CD4-positive, alpha-beta memory T cell (primary cell): ENCODE measurements at regions of chr5 and their contacts with region 1.

Region 1: DNA sequence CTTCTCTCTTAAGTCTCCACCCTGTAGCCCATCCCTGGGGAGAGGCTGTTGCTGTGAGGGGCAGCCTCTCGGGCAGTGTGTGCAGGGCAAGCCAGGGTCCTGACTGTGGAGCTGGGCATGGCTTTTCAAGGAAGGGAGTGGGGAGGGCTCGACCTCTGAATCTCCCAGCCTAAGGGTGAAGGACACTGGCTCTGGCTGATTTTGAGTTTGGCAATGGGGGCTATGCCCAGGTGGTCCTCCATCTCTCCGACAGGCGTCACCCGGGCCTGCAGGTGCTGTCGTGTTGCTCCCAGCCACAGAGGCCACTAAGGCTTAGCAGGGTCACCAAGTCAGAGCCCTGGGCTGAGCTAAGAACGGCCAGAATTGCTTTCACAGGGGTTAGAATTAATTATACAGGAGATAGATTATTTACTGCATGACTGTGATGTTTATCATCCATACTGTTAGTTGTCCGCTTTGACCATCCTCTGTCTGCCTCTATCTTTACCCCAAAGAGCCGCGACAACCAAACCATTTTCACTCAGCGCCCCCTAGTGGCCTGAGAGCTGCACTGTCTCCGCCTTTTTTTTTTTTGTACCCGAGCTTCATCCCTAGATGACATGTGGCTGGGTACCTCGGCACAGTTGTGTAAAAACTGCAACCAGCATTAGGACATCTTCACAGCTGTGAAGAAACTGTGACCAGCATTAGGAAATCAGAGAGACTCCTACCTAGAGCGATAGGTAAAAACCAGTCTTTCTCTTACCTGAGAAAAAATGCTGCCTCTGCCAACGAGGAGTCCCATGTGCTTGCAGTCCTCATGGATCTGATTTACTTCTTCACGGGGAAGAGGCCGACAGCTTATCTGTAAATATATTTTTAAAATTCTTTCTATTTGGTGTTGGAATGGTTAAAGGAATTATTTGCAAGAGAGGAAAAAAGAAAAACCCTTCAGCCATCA is 44.5 kb downstream of the AGXT2 start:
- DNase-seq: peak in 4 of 5 donors; percentile 22 to 46 (median 32)
- H3K4me3 ChIP-seq: no peak overlapping the region
- H3K4me3 Mint-ChIP-seq: no peak overlapping the region
- H3K27ac ChIP-seq: no peak overlapping the region
- H3K27ac Mint-ChIP-seq: no peak overlapping the region
- H3K4me1 ChIP-seq: no peaks in the 10 kb centered on the region
- H3K4me1 Mint-ChIP-seq: no peaks in the 10 kb centered on the region
- H3K27me3 ChIP-seq: no peaks in the 10 kb centered on the region
- H3K27me3 Mint-ChIP-seq: peaks cover 14 to 22% of the 10 kb centered on the region in 2 donors

Region 2: GRCh38 chr5:34474573-34475021 is 528.7 kb before region 1 on chr5:
- CTCF ChIA-PET with region 1: no interaction called
- POLR2A ChIA-PET with region 1: no interaction called
- intact Hi-C with region 1: loop called (anchors 1 kb)
- DNase-seq: peak in 4 of 5 donors; percentile 15 to 28 (median 24)
- H3K4me3 ChIP-seq: no peak overlapping the region
- H3K4me3 Mint-ChIP-seq: no peak overlapping the region
- H3K27ac ChIP-seq: no peak overlapping the region
- H3K27ac Mint-ChIP-seq: no peak overlapping the region
- H3K4me1 ChIP-seq: no peaks in the 10 kb centered on the region
- H3K4me1 Mint-ChIP-seq: peaks cover 0 to 2% (median 0%) of the 10 kb centered on the region in 4 donors
- H3K27me3 ChIP-seq: no peaks in the 10 kb centered on the region
- H3K27me3 Mint-ChIP-seq: peaks cover 7 to 13% of the 10 kb centered on the region in 2 donors

Region 3: GRCh38 chr5:34486160-34486848 is 517.0 kb before region 1 on chr5:
- CTCF ChIA-PET with region 1: interaction called, 6 read pairs
- POLR2A ChIA-PET with region 1: no interaction called
- intact Hi-C with region 1: loop called (anchors 1 kb)
- DNase-seq: peak in 4 of 5 donors; percentile 34 to 47 (median 42)
- H3K4me3 ChIP-seq: no peak overlapping the region
- H3K4me3 Mint-ChIP-seq: no peak overlapping the region
- H3K27ac ChIP-seq: no peak overlapping the region
- H3K27ac Mint-ChIP-seq: no peak overlapping the region
- H3K4me1 ChIP-seq: no peaks in the 10 kb centered on the region
- H3K4me1 Mint-ChIP-seq: peaks cover 3 to 5% (median 4%) of the 10 kb centered on the region in 4 donors
- H3K27me3 ChIP-seq: no peaks in the 10 kb centered on the region
- H3K27me3 Mint-ChIP-seq: peaks cover 17 to 30% of the 10 kb centered on the region in 2 donors

Region 4: GRCh38 chr5:34522599-34523386 is 480.5 kb before region 1 on chr5:
- CTCF ChIA-PET with region 1: interaction called, 14 read pairs
- POLR2A ChIA-PET with region 1: no interaction called
- intact Hi-C with region 1: loop called (anchors 1 kb)
- DNase-seq: peak; percentile 33 to 50 (median 41)
- H3K4me3 ChIP-seq: no peak overlapping the region
- H3K4me3 Mint-ChIP-seq: no peak overlapping the region
- H3K27ac ChIP-seq: no peak overlapping the region
- H3K27ac Mint-ChIP-seq: no peak overlapping the region
- H3K4me1 ChIP-seq: no peaks in the 10 kb centered on the region
- H3K4me1 Mint-ChIP-seq: peaks cover 0 to 1% (median 0%) of the 10 kb centered on the region in 4 donors
- H3K27me3 ChIP-seq: no peaks in the 10 kb centered on the region
- H3K27me3 Mint-ChIP-seq: peaks cover 2 to 7% of the 10 kb centered on the region in 2 donors

Region 5: DNA sequence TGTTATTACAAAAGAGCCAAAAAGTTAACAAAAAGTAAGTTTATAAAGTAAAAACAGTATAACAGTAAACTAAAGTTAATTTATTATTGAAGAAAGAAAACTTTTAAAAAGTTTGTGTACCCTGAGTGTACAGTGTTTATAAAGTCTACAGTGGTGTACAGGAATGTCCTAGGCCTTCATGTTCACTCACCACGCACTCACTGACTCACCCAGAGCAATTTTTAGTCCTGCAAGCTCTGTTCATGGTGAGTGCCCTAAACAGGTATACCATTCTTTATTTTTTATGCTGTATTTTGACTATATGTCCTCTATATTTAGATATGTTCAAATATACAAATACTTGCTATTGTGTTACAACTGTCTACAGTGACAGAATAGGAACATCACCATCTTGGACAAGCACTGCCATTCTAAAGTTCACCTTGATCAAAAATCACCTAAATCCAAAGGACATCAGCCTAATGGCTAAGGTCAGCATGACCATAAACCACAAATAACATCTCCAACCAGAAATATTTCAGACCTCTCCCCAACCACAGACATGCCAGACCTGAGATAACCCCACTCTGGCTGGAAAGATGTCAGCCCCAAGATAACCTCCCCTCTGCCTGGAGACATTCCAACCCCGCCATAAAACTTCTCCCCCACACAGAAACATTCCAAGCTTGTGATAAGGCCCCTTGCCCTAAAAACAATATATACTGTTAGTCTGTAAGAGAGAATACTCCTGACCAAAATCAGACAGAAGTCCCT is 11.6 kb before region 1 on chr5:
- CTCF ChIA-PET with region 1: interaction called, 26 read pairs
- POLR2A ChIA-PET with region 1: no interaction called
- intact Hi-C with region 1: no loop called
- DNase-seq: no peak
- H3K4me3 ChIP-seq: no peak overlapping the region
- H3K4me3 Mint-ChIP-seq: no peak overlapping the region
- H3K27ac ChIP-seq: no peak overlapping the region
- H3K27ac Mint-ChIP-seq: no peak overlapping the region
- H3K4me1 ChIP-seq: no peaks in the 10 kb centered on the region
- H3K4me1 Mint-ChIP-seq: no peaks in the 10 kb centered on the region
- H3K27me3 ChIP-seq: no peaks in the 10 kb centered on the region
- H3K27me3 Mint-ChIP-seq: peaks cover 15 to 32% of the 10 kb centered on the region in 2 donors